ENCODE measurements at regions of chr16 and their contacts with region 1.

Region 1: GRCh38 chr16:57757326-57757786 is 21.8 kb downstream of the KATNB1 start:
- DNase-seq: peak; percentile 84 to 96 (median 95)
- ATAC-seq: peak; percentile 94
- H3K4me3 ChIP-seq: no peak overlapping the region
- H3K4me1 ChIP-seq: no peaks in the 10 kb centered on the region
- CTCF ChIP-seq: peak; percentile 93

Region 2: GRCh38 chr16:57807968-57808528 is 50.7 kb after region 1 on chr16:
- intact Hi-C with region 1: loop called in 1 of 2 experiments (anchors 5 kb)
- DNase-seq: peak; percentile 86 to 87 (median 87)
- ATAC-seq: peak; percentile 87
- H3K4me3 ChIP-seq: no peak overlapping the region
- H3K4me1 ChIP-seq: peaks cover 19% of the 10 kb centered on the region
- CTCF ChIP-seq: no peak

Region 3: DNA sequence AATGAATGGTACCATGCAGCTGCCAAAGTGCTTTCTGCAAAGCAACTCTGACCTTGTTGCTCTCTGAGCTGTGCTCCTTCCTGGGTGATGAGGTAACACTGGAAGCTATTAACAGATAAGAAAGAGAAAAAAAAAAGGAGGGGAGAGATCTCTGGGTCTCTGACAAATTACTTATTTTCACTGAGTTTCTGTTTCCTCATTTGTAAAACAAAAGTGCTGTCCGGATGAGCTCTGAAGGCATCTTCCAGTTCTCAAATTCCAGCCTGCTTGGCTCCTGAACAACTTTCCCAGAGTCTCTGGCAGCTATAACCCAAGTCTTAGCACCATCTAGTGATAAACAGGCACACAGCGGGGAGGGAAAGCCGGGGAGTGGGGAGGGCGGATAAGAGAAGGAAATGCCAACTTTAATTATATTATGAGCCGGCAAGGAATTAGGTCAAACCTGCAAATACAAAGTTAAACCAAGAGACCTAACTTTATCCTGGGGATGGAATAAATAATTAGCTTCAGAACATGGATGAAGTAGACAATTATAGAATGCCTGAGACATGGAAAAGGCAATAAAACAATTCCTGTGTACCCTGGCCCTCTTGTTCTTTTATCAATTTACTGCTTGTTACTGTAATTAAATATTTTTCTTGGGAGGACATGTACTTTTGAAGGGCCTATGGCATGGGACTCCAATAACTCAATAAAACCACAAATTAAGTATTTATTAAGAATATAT is 106.2 kb after region 1 on chr16:
- intact Hi-C with region 1: loop called in 1 of 2 experiments (anchors 5 kb)
- DNase-seq: peak in 2 of 3 donors; percentile 54 to 71
- ATAC-seq: peak; percentile 80
- H3K4me3 ChIP-seq: no peak overlapping the region
- H3K4me1 ChIP-seq: peaks cover 3% of the 10 kb centered on the region
- CTCF ChIP-seq: no peak

Region 4: GRCh38 chr16:58110571-58111301 is 353.4 kb after region 1 on chr16:
- intact Hi-C with region 1: no loop called
- DNase-seq: no peak
- ATAC-seq: peak; percentile 14
- H3K4me3 ChIP-seq: no peak overlapping the region
- H3K4me1 ChIP-seq: peaks cover under 1% of the 10 kb centered on the region
- CTCF ChIP-seq: no peak